Left ventricle myocardium superior (tissue), 1 donor: ENCODE measurements at regions of chr9 and their contacts with region 1.

Region 1: GRCh38 chr9:134778841-134779411 is 101.7 kb upstream of the FCN2 start:
- DNase-seq: peak; percentile 81
- ATAC-seq: peak; percentile 76

Region 2: GRCh38 chr9:134912126-134912968 is 133.4 kb after region 1 on chr9:
- intact Hi-C with region 1: no loop called
- DNase-seq: no peak
- ATAC-seq: no peak

Region 3: GRCh38 chr9:134983074-134983473 is 204.1 kb after region 1 on chr9:
- intact Hi-C with region 1: loop called (anchors 10 kb)
- DNase-seq: peak; percentile 78
- ATAC-seq: peak; percentile 63